Naive thymus-derived CD4-positive, alpha-beta T cell (primary cell): ENCODE measurements at regions of chr10 and their contacts with region 1.

Region 1: DNA sequence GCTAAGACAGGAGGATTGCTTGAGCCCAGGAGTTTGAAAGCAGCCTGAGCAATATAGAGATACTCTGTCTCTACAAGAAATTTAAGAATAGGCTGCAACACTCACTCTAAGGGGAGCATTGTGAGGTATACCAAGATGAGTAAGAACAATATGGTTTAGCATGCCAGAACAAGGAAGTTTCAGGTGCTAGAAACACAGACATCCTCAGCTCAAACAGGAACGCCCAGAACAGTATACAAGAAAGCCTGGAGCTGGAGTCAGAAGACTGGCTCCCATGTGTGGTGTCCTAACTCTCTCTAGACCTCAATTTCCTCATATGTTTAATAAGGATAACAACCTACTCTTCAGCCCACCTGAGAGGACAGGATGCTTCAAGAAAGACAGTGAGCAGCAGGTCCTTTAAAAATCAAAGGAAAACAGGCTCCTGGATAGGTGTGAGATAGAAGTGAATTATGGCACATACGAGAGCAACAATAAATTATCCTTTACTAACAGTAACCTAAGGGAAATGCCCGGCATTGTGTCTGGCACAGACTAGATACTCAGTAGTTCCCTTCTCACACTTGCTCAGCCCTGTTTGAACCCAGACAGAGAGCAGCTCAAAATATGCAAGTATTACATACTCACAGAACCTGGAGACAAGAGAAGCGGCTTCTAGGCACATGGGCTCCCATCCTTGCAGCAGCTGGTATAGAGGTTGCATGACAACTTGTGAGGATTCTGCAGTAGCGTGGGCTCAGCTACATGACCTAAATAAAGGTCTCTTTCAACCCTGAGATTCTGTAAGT is 45.4 kb downstream of the KAT6B start:
- DNase-seq: peak in 1 of 9 donors; percentile 15
- ATAC-seq: peak; percentile 68
- H3K4me3 ChIP-seq: no peak overlapping the region
- H3K4me3 Mint-ChIP-seq: peak overlapping the region; percentile 34 to 66 (median 51)
- H3K27ac ChIP-seq: peak overlapping the region; percentile 27
- H3K27ac Mint-ChIP-seq: peak overlapping the region; percentile 1 to 87 (median 61)
- H3K4me1 ChIP-seq: peaks cover 0 to 8% of the 10 kb centered on the region in 2 donors
- H3K4me1 Mint-ChIP-seq: peaks cover 19 to 81% (median 65%) of the 10 kb centered on the region in 7 donors
- H3K27me3 ChIP-seq: no peaks in the 10 kb centered on the region
- H3K27me3 Mint-ChIP-seq: no peaks in the 10 kb centered on the region

Region 2: GRCh38 chr10:74909670-74910069 is 37.9 kb after region 1 on chr10:
- CTCF ChIA-PET with region 1: no interaction called
- POLR2A ChIA-PET with region 1: no interaction called
- intact Hi-C with region 1: loop called in 1 of 2 experiments (anchors 5 kb)
- DNase-seq: no peak
- ATAC-seq: no peak
- H3K4me3 ChIP-seq: no peak overlapping the region
- H3K4me3 Mint-ChIP-seq: no peak overlapping the region
- H3K27ac ChIP-seq: no peak overlapping the region
- H3K27ac Mint-ChIP-seq: peak overlapping the region in 1 of 9 donors; percentile 70
- H3K4me1 ChIP-seq: peaks cover 6 to 7% of the 10 kb centered on the region in 2 donors
- H3K4me1 Mint-ChIP-seq: peaks cover 20 to 83% (median 73%) of the 10 kb centered on the region in 7 donors
- H3K27me3 ChIP-seq: no peaks in the 10 kb centered on the region
- H3K27me3 Mint-ChIP-seq: no peaks in the 10 kb centered on the region